Activated CD4-positive, alpha-beta T cell treated with anti-CD3 and anti-CD28 coated beads, Interleukin-2, amount 10 ng/mL, durations not matched to agents 24 days and 14 days (primary cell): ENCODE measurements at regions of chr5 and their contacts with region 1.

Region 1: GRCh38 chr5:66440202-66440680 is 156.0 kb upstream of the MAST4 start:
- DNase-seq: peak; percentile 57
- H3K4me3 Mint-ChIP-seq: no peak overlapping the region
- H3K27ac Mint-ChIP-seq: peak overlapping the region; percentile 63
- H3K4me1 Mint-ChIP-seq: peaks cover 6% of the 10 kb centered on the region
- H3K27me3 Mint-ChIP-seq: no peaks in the 10 kb centered on the region

Region 2: GRCh38 chr5:66406761-66407336 is 33.4 kb before region 1 on chr5:
- intact Hi-C with region 1: no loop called
- DNase-seq: no peak
- H3K4me3 Mint-ChIP-seq: no peak overlapping the region
- H3K27ac Mint-ChIP-seq: no peak overlapping the region
- H3K4me1 Mint-ChIP-seq: no peaks in the 10 kb centered on the region
- H3K27me3 Mint-ChIP-seq: peaks cover 11% of the 10 kb centered on the region

Region 3: DNA sequence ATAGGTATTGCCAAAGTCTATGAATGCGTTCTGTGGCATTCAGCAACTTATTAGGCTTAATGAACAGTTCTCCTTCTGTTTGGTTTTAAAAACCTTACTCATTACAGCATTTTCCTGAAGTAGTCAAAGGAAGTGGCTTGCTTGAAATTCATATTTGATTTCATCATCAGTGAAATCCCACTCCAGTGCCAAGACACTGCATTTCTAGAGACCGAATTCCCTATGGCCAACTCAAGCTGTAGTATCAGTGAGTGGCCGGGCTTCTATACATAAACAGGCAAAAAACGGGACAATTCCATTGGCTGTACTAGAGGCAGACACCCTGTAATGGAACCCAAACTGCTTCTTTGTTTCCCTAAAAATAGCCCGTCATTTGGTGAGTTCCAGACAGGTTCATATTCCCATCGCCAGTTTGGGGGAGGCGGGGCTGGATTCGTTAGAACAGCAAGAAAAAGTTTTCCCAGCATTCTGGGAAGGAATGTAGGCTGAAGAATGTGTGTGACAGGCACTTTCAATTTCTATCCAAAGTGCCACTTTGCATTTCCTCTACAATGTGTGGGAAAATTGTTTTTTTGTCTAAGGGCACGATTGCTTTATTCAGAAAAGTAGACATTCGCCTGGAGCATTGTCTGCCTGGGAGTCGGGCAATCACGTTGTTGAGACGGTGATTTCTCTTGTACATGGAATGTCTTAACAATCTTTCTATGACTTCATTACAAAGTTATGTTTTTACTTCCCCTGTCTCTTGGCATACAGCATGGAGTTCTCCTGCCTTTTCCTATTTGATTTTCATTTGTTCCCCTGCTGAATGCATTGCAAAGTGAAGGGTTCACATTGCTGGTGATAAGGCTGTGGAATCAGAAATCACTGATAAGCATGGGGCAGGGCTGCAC is 14.2 kb after region 1 on chr5:
- intact Hi-C with region 1: no loop called
- DNase-seq: no peak
- H3K4me3 Mint-ChIP-seq: no peak overlapping the region
- H3K27ac Mint-ChIP-seq: no peak overlapping the region
- H3K4me1 Mint-ChIP-seq: no peaks in the 10 kb centered on the region
- H3K27me3 Mint-ChIP-seq: no peaks in the 10 kb centered on the region

Region 4: GRCh38 chr5:66540078-66540477 is 99.8 kb after region 1 on chr5:
- intact Hi-C with region 1: loop called (anchors 1 kb)
- DNase-seq: peak; percentile 41
- H3K4me3 Mint-ChIP-seq: no peak overlapping the region
- H3K27ac Mint-ChIP-seq: no peak overlapping the region
- H3K4me1 Mint-ChIP-seq: peaks cover 9% of the 10 kb centered on the region
- H3K27me3 Mint-ChIP-seq: no peaks in the 10 kb centered on the region